Uterus (tissue), 4 donors: ENCODE measurements at regions of chr11 and their contacts with region 1.

Region 1: GRCh38 chr11:3797329-3798095 is at the start of gene NUP98:
- DNase-seq: peak; percentile 100
- H3K4me3 ChIP-seq: peak within 1 kb of the TSS; percentile 75 to 100
- H3K27ac ChIP-seq: peak within 1 kb of the TSS; percentile 94 to 96
- H3K4me1 ChIP-seq: no peaks in the 10 kb centered on the region
- H3K27me3 ChIP-seq: no peaks in the 10 kb centered on the region
- CTCF ChIP-seq: peak in 2 of 4 experiments; percentile 10 to 28
- POLR2A ChIP-seq: peak; percentile 98 to 100
- total RNA-seq, gene NUP98: 55.1 to 189 (median 123) TPM

Region 2: GRCh38 chr11:3841426-3842350 is 44.2 kb after region 1 on chr11:
- intact Hi-C with region 1: loop called (anchors 2 kb)
- DNase-seq: peak; percentile 84 to 88
- H3K4me3 ChIP-seq: peak overlapping the region; percentile 89 to 96
- H3K27ac ChIP-seq: peak overlapping the region; percentile 97 to 99
- H3K4me1 ChIP-seq: peaks cover 0 to 9% of the 10 kb centered on the region in 2 donors
- H3K27me3 ChIP-seq: no peaks in the 10 kb centered on the region
- CTCF ChIP-seq: peak; percentile 68 to 91 (median 77)
- POLR2A ChIP-seq: peak in 1 of 2 donors; percentile 46

Region 3: GRCh38 chr11:4560467-4560866 is 763.0 kb after region 1 on chr11:
- intact Hi-C with region 1: no loop called
- DNase-seq: no peak
- H3K4me3 ChIP-seq: no peak overlapping the region
- H3K27ac ChIP-seq: no peak overlapping the region
- H3K4me1 ChIP-seq: no peaks in the 10 kb centered on the region
- H3K27me3 ChIP-seq: no peaks in the 10 kb centered on the region
- CTCF ChIP-seq: no peak
- POLR2A ChIP-seq: no peak